ENCODE measurements at regions of chr4 and their contacts with region 1.

Region 1: GRCh38 chr4:1683736-1684505 is at the start of gene FAM53A:
- DNase-seq: peak; percentile 80 to 90 (median 87)
- H3K4me3 ChIP-seq: peak within 1 kb of the TSS; percentile 41 to 78 (median 73)
- H3K4me3 Mint-ChIP-seq: peak within 1 kb of the TSS; percentile 88 to 94
- H3K27ac ChIP-seq: peak within 1 kb of the TSS in 1 of 2 donors; percentile 58
- H3K27ac Mint-ChIP-seq: peak within 1 kb of the TSS; percentile 72 to 90 (median 80)
- H3K4me1 ChIP-seq: peaks cover 16 to 23% of the 10 kb centered on the region in 2 donors
- H3K4me1 Mint-ChIP-seq: peaks cover 15% of the 10 kb centered on the region
- H3K27me3 ChIP-seq: no peaks in the 10 kb centered on the region
- H3K27me3 Mint-ChIP-seq: peaks cover 0 to 5% (median 1%) of the 10 kb centered on the region in 3 donors
- CTCF ChIP-seq: no peak
- polyA plus RNA-seq, gene FAM53A: 0.40 to 0.82 (median 0.76) TPM

Region 2: GRCh38 chr4:1448602-1449420 is 235.1 kb before region 1 on chr4:
- intact Hi-C with region 1: no loop called
- DNase-seq: no peak
- H3K4me3 ChIP-seq: no peak overlapping the region
- H3K4me3 Mint-ChIP-seq: no peak overlapping the region
- H3K27ac ChIP-seq: no peak overlapping the region
- H3K27ac Mint-ChIP-seq: no peak overlapping the region
- H3K4me1 ChIP-seq: no peaks in the 10 kb centered on the region
- H3K4me1 Mint-ChIP-seq: no peaks in the 10 kb centered on the region
- H3K27me3 ChIP-seq: no peaks in the 10 kb centered on the region
- H3K27me3 Mint-ChIP-seq: peaks cover 3 to 10% (median 5%) of the 10 kb centered on the region in 3 donors
- CTCF ChIP-seq: no peak

Region 3: DNA sequence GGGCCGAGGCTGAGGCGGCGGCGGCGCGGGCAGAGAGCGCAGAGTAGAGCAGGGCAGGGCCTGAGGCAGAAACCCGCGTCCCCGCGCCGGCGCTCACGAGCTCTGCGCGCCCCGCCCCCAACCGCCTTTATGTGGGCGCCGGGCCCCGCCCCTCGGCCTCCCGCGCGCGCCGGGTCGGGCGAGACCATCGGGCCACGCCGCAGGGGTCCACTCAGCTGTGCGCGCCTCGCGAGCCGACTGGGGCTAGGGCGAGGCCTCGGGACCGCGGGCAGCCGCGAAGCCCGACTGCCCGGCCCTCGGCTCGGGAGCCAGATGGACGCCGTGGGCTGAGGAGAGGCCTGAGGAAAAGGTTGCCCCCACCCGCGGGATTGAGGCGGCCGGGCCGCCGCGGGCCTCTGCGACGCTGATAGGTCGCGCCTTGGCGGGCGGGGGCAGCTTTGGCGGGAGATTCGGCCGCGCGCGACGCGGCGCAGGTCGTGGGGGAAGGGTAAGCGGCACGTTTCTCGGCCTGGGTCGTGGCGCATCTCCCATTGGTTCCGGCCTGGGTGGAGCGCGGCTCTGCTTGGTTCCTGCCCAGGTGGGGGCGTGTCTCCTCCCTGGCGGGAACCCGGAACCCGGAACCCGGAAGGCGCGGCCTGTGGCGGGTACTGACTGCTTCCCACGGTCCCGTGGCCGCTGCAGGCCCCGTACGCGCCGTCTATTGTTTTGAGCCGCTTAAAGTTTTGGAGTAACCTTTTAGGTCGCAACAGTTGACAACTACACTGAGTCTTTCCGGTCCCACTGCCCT is 28.5 kb after region 1 on chr4 and contains the start of gene SLBP:
- intact Hi-C with region 1: loop called in 1 of 2 experiments (anchors 2 kb)
- DNase-seq: peak; percentile 97 to 99 (median 98)
- H3K4me3 ChIP-seq: peak within 1 kb of the TSS; percentile 73 to 91 (median 88)
- H3K4me3 Mint-ChIP-seq: peak within 1 kb of the TSS; percentile 97 to 98
- H3K27ac ChIP-seq: peak within 1 kb of the TSS; percentile 68 to 92
- H3K27ac Mint-ChIP-seq: peak within 1 kb of the TSS; percentile 95 to 99 (median 97)
- H3K4me1 ChIP-seq: peaks cover 48 to 61% of the 10 kb centered on the region in 2 donors
- H3K4me1 Mint-ChIP-seq: peaks cover 59% of the 10 kb centered on the region
- H3K27me3 ChIP-seq: no peaks in the 10 kb centered on the region
- H3K27me3 Mint-ChIP-seq: no peaks in the 10 kb centered on the region
- CTCF ChIP-seq: no peak
- polyA plus RNA-seq, gene SLBP: 39.6 to 63.7 (median 59.1) TPM

Region 4: GRCh38 chr4:1870578-1871443 is 186.9 kb after region 1 on chr4 and contains the start of gene NSD2:
- intact Hi-C with region 1: loop called in 1 of 2 experiments (anchors 5 kb)
- DNase-seq: peak; percentile 83 to 91 (median 87)
- H3K4me3 ChIP-seq: peak within 1 kb of the TSS; percentile 59 to 87 (median 82)
- H3K4me3 Mint-ChIP-seq: peak within 1 kb of the TSS; percentile 87 to 90
- H3K27ac ChIP-seq: peak within 1 kb of the TSS; percentile 68 to 91
- H3K27ac Mint-ChIP-seq: peak within 1 kb of the TSS; percentile 67 to 93 (median 87)
- H3K4me1 ChIP-seq: peaks cover 19 to 30% of the 10 kb centered on the region in 2 donors
- H3K4me1 Mint-ChIP-seq: peaks cover 27% of the 10 kb centered on the region
- H3K27me3 ChIP-seq: no peaks in the 10 kb centered on the region
- H3K27me3 Mint-ChIP-seq: peaks cover 7 to 14% (median 7%) of the 10 kb centered on the region in 3 donors
- CTCF ChIP-seq: no peak
- polyA plus RNA-seq, gene NSD2: 1.9 to 8.7 (median 2.3) TPM